H1 (cell line): ENCODE measurements at regions of chr14 and their contacts with region 1.

Region 1: DNA sequence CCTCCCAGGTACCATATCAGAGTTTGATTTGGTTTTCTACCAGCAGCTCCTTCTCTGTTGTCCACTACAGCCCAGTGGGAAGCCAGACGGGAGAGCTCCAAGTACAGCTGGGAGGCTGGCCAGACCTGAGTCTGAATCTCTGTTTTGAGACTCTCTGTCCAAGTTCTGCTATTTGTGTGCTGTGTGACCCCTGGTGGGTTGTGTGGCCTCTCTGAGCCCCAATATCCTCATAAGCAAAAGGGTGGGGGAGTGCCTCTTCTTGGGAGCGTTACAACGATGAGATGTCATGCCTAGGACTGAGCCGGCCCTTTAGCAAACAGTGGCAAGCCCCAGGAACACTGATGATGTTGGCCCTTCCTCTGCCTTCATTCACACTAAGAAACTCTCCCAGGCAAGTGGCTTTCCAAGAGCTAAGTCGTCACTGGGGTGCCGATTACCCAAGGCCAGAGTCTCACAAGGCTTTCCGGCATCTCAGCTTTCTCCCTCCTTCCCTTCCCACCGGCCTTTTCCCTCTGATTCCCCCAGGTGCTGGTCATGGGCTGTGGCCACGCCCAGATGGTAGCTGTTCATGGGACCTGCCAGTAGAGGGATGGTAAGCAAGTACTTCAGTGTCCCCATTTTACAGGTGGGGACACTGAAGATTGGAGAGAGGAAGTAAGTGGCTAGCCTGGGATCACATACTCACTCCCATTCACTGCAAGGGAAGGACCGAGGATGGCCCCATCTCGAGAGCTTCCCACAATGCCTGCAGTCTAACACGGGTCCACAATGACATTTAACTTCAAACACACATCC is 47.7 kb downstream of the BCL11B start:
- DNase-seq: no peak
- H3K4me3 ChIP-seq: no peak overlapping the region
- H3K27ac ChIP-seq: no peak overlapping the region
- H3K4me1 ChIP-seq: peaks cover 0 to 4% (median 1%) of the 10 kb centered on the region in 4 experiments; a peak in 2 of 7 replicates
- H3K27me3 ChIP-seq: no peaks in the 10 kb centered on the region
- CTCF ChIP-seq: peak; percentile 47 to 76 (median 50); a peak in 3 of 4 replicates
- EP300 ChIP-seq: no peak
- POLR2A ChIP-seq: no peak
- RAD21 ChIP-seq: peak; percentile 9 to 53; a peak in 2 of 4 replicates

Region 2: GRCh38 chr14:99174081-99174851 is 50.0 kb before region 1 on chr14:
- CTCF ChIA-PET with region 1: interaction called, 12 read pairs
- POLR2A ChIA-PET with region 1: no interaction called
- DNase-seq: peak in 1 of 2 experiments; percentile 68
- H3K4me3 ChIP-seq: no peak overlapping the region
- H3K27ac ChIP-seq: no peak overlapping the region
- H3K4me1 ChIP-seq: peaks cover 0 to 11% (median 8%) of the 10 kb centered on the region in 4 experiments; a peak in 6 of 7 replicates
- H3K27me3 ChIP-seq: no peaks in the 10 kb centered on the region
- CTCF ChIP-seq: peak; percentile 46 to 53 (median 47)
- EP300 ChIP-seq: no peak
- POLR2A ChIP-seq: no peak
- RAD21 ChIP-seq: peak; percentile 34 to 47; a peak in 3 of 4 replicates

Region 3: GRCh38 chr14:99199846-99200653 is 24.3 kb before region 1 on chr14:
- CTCF ChIA-PET with region 1: interaction called, 13 read pairs
- POLR2A ChIA-PET with region 1: interaction called, 3 read pairs
- DNase-seq: no peak
- H3K4me3 ChIP-seq: no peak overlapping the region
- H3K27ac ChIP-seq: no peak overlapping the region
- H3K4me1 ChIP-seq: peaks cover 0 to 5% (median under 1%) of the 10 kb centered on the region in 4 experiments; a peak in 1 of 7 replicates
- H3K27me3 ChIP-seq: no peaks in the 10 kb centered on the region
- CTCF ChIP-seq: peak in 1 of 3 experiments; percentile 1; a peak in 2 of 4 replicates
- EP300 ChIP-seq: no peak
- POLR2A ChIP-seq: no peak
- RAD21 ChIP-seq: peak; percentile 5 to 37; a peak in 3 of 4 replicates

Region 4: DNA sequence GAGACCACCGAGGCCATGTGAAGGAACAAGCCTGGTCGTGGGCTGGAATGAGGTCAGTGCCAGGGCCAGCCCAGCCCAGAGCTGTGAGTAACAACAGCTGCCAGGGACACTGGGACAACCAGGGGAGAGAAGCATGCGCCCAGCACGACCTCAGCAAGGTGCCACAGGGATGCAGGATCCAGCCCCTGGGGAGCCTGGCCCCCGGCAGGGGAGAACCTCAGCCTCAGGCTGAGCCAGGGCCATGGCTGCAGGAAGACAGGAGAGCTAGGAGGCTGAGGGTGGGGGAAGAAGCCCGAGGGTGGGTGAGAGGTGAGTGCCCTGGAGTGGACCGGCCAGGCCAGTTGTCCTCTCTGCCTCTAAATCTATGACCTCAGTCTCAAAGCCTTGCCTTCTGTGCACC is 14.9 kb before region 1 on chr14:
- CTCF ChIA-PET with region 1: interaction called, 11 read pairs
- POLR2A ChIA-PET with region 1: interaction called, 4 read pairs
- DNase-seq: no peak
- H3K4me3 ChIP-seq: no peak overlapping the region
- H3K27ac ChIP-seq: no peak overlapping the region
- H3K4me1 ChIP-seq: peaks cover 0 to 10% (median 0%) of the 10 kb centered on the region in 4 experiments; a peak in 2 of 7 replicates
- H3K27me3 ChIP-seq: no peaks in the 10 kb centered on the region
- CTCF ChIP-seq: no peak
- EP300 ChIP-seq: no peak
- POLR2A ChIP-seq: no peak
- RAD21 ChIP-seq: no peak